GM12878 (cell line): ENCODE measurements at regions of chr9 and their contacts with region 1.

Region 1: DNA sequence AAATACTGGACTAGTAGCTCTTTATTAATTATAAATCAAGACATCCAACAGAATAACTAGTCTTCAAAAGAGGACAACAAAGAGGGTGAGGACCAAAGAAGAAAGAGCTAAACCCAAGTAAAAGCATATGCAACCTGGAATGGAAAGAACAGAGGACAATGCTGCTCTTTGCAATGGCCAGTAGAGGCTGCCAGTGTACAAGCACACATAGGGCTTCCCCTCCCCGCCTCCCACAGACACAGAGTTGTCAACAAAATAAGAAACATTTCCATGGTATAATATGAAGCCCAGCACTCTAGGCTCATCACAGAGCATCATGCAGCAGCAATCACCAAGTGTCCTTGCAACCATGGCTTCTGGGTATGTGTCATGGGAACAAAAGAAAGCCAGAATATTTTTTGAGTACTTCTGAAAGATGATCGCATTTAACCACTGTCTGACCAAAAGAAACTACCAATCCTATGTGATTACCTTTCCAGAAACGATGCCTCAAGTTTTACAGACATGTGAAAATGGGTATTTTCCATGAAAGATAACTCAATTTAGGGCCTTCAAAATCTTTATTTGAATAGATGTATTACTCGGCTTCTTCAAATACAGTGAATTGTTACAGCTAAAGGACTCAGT is 58.1 kb downstream of the RFX3 start:
- DNase-seq: no peak
- ATAC-seq: peak; percentile 99
- H3K4me3 ChIP-seq: no peak overlapping the region
- H3K27ac ChIP-seq: no peak overlapping the region
- H3K4me1 ChIP-seq: no peaks in the 10 kb centered on the region
- H3K27me3 ChIP-seq: no peaks in the 10 kb centered on the region
- CTCF ChIP-seq: peak; percentile 99 to 100 (median 100)
- EP300 ChIP-seq: no peak
- POLR2A ChIP-seq: no peak
- RAD21 ChIP-seq: peak; percentile 97

Region 2: GRCh38 chr9:3240656-3241268 is 226.9 kb before region 1 on chr9:
- CTCF ChIA-PET with region 1: interaction called, 18 read pairs
- POLR2A ChIA-PET with region 1: no interaction called
- RAD21 ChIA-PET with region 1: interaction called, 4 read pairs
- SMC1A ChIA-PET with region 1: interaction called, 11 read pairs
- in situ Hi-C with region 1: no loop called
- intact Hi-C with region 1: no loop called
- DNase-seq: peak; percentile 35
- ATAC-seq: peak; percentile 97
- H3K4me3 ChIP-seq: no peak overlapping the region
- H3K27ac ChIP-seq: no peak overlapping the region
- H3K4me1 ChIP-seq: peaks cover 10% of the 10 kb centered on the region; the same call in 1 of the 2 replicates
- H3K27me3 ChIP-seq: no peaks in the 10 kb centered on the region
- CTCF ChIP-seq: peak; percentile 81 to 93 (median 86); a peak in 5 of 6 replicates
- EP300 ChIP-seq: no peak
- POLR2A ChIP-seq: no peak
- RAD21 ChIP-seq: peak; percentile 89

Region 3: GRCh38 chr9:3516667-3517330 is 49.1 kb after region 1 on chr9:
- CTCF ChIA-PET with region 1: interaction called, 13 read pairs
- POLR2A ChIA-PET with region 1: interaction called, 3 read pairs
- RAD21 ChIA-PET with region 1: interaction called, 180 read pairs
- SMC1A ChIA-PET with region 1: interaction called, 26 read pairs
- in situ Hi-C with region 1: no loop called
- intact Hi-C with region 1: no loop called
- DNase-seq: no peak
- ATAC-seq: peak; percentile 5; the same call in 2 of the 3 replicates
- H3K4me3 ChIP-seq: no peak overlapping the region
- H3K27ac ChIP-seq: no peak overlapping the region
- H3K4me1 ChIP-seq: peaks cover under 1% of the 10 kb centered on the region; the same call in 1 of the 2 replicates
- H3K27me3 ChIP-seq: no peaks in the 10 kb centered on the region
- CTCF ChIP-seq: no peak
- EP300 ChIP-seq: no peak
- POLR2A ChIP-seq: no peak
- RAD21 ChIP-seq: no peak

Region 4: DNA sequence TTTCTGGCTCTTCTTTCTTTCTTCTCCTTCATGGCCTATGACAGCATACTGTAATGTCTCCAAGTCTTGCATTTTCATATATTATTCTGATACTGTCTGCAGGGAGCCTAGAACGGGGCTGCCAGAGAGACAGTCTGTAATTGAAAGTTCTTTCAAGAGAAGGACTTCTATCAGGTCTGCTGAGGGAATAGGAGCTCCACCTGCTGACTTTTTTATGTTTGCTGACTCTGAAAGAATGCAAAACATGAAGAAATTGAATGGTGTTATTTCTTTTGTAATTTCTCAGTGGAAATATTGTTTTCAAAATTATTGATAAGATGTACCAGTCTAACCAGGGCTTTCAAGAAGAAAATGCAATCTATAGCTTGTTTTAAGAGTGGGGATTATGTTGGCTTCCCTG is 179.9 kb after region 1 on chr9:
- CTCF ChIA-PET with region 1: interaction called, 27 read pairs
- POLR2A ChIA-PET with region 1: no interaction called
- RAD21 ChIA-PET with region 1: interaction called, 16 read pairs
- SMC1A ChIA-PET with region 1: interaction called, 14 read pairs
- in situ Hi-C with region 1: loop called (anchors 5 kb)
- intact Hi-C with region 1: loop called (anchors 2 kb)
- DNase-seq: no peak
- ATAC-seq: no peak
- H3K4me3 ChIP-seq: no peak overlapping the region
- H3K27ac ChIP-seq: no peak overlapping the region
- H3K4me1 ChIP-seq: no peaks in the 10 kb centered on the region
- H3K27me3 ChIP-seq: no peaks in the 10 kb centered on the region
- CTCF ChIP-seq: peak in 1 of 3 experiments; percentile 36; a peak in 2 of 6 replicates
- EP300 ChIP-seq: no peak
- POLR2A ChIP-seq: no peak
- RAD21 ChIP-seq: peak; percentile 54

Region 5: DNA sequence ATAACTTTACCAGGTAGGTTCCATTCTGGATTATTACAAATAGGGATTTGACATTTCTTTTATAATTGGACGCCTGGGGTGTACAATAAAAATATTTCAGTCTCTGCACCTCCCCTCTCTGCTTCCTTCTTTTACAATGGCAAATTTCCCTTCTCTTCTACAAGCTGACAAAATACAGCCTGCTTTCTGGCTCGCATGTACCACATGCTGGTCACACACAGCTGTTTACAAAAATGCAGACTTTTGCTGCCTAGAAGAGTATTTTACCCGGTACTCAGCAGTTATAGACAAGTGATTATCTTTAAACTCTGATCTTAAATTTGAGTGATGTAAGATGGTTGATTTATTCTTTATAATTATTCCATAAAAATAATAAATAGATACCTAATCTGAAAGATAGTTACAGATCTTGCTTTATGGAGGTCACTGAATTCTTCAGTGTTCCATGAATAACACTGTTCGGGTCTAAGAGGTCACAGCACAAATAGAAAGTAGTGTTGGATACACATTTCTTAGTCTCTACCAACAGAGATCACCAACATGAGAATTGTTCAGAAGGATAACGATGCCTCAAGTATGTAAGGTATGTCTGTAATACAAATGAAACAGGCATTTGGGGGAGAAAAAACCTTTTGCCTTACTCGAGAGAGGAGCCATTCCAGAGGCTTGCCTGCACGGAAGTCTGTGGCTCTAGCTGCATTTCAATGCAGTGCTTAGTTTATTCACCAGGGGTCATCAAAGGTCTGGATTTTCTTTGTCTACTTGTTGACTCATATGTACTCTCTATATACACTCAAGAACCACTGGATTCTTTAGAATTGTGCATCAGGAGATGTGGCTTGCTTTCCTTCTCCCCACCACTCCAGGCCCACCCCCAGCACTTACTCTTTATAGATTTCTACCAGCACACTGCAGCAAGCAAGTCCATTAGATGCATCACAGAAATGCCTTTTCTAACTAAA is 264.7 kb after region 1 on chr9:
- CTCF ChIA-PET with region 1: interaction called, 25 read pairs
- POLR2A ChIA-PET with region 1: no interaction called
- RAD21 ChIA-PET with region 1: interaction called, 7 read pairs
- SMC1A ChIA-PET with region 1: interaction called, 20 read pairs
- in situ Hi-C with region 1: loop called (anchors 10 kb)
- intact Hi-C with region 1: loop called (anchors 1 kb)
- DNase-seq: peak; percentile 64
- ATAC-seq: peak; percentile 88
- H3K4me3 ChIP-seq: no peak overlapping the region
- H3K27ac ChIP-seq: no peak overlapping the region
- H3K4me1 ChIP-seq: peaks cover 22% of the 10 kb centered on the region
- H3K27me3 ChIP-seq: no peaks in the 10 kb centered on the region
- CTCF ChIP-seq: peak; percentile 60 to 83 (median 65)
- EP300 ChIP-seq: no peak
- POLR2A ChIP-seq: no peak
- RAD21 ChIP-seq: peak; percentile 83

Region 6: DNA sequence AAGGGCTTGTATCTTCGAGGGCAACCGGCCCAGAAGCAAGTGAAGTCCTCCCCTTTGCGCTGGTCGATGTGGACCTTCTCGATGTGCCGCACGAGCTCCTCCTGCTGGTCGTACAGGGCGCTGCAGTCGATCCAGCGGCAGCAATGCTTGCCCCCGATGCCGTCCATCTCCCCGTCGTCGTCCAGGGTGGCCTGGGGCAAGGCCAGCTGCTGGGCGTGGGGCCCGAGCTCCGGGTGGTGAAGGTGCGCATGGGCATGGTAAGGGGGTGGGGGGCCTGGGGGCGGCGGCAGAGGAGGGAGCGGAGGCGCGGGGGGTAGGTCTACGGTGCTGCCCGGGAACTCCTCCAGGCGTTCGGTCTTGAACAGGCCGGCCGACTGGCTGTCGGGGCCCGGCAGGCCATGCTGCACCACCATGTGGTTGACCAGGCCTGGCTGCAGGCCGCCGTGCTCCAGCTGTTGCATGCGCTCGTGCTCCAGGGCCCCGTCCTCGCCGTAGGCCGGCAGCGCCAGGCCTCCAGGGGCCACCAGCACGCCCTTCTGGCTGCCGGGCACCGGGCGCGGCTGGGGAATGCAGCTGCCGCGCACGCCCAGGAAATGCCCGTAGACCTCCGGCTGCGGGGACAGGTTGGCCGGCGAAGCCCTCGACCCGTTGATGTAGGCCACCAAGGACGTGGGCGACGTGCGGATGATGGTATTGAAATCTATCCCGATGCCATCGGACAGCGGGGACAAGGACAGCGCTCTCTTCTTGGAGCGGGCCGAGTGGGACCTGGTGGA is 650.3 kb after region 1 on chr9:
- CTCF ChIA-PET with region 1: interaction called, 6 read pairs
- POLR2A ChIA-PET with region 1: no interaction called
- RAD21 ChIA-PET with region 1: no interaction called
- SMC1A ChIA-PET with region 1: interaction called, 3 read pairs
- in situ Hi-C with region 1: loop called (anchors 10 kb)
- intact Hi-C with region 1: loop called (anchors 2 kb)
- DNase-seq: no peak
- ATAC-seq: peak; percentile 86
- H3K4me3 ChIP-seq: no peak overlapping the region
- H3K27ac ChIP-seq: no peak overlapping the region
- H3K4me1 ChIP-seq: no peaks in the 10 kb centered on the region
- H3K27me3 ChIP-seq: no peaks in the 10 kb centered on the region
- CTCF ChIP-seq: peak; percentile 35 to 79 (median 62); a peak in 5 of 6 replicates
- EP300 ChIP-seq: no peak
- POLR2A ChIP-seq: no peak
- RAD21 ChIP-seq: peak; percentile 46; the same call in 1 of the 2 replicates